GM12878 (cell line): ENCODE measurements at regions of chr6 and their contacts with region 1.

Region 1: DNA sequence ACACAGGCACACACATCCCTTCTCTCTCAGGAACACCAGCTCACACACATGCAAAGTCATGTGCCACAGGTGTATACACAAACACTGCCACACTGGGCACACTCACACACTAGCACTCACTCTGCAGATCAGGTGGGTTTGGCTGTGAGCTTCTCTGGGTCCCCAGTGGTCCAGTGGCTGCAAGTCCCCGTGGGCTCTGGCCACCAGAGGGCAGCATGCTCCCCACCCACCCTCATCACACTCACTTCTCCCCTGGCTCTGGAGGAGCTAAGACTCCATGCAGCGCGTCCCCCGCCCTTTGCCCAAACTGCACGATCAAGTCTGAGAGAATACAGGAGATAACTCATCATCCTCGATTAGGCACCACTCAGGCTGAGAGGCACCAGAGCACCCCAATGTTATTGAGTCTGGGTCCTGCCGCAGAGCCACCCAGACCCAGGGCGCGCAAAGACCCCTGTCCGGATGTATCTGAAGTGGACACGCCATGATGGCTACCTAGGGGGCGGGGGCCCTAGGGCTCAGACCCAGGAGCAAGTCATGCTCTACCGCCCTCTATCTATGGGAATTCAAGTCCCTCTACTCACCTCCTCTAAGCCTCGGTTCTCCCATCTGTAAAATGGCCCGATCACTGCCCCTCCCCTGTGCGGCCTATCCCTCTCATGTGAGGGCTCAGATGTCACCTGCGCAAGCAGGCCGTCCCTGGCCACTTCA is 90.5 kb downstream of the GRM4 start:
- DNase-seq: no peak
- ATAC-seq: peak; percentile 92
- H3K4me3 ChIP-seq: no peak overlapping the region
- H3K27ac ChIP-seq: no peak overlapping the region
- H3K4me1 ChIP-seq: no peaks in the 10 kb centered on the region
- H3K27me3 ChIP-seq: no peaks in the 10 kb centered on the region; a peak in 3 of 4 replicates
- CTCF ChIP-seq: peak; percentile 65 to 93 (median 82)
- EP300 ChIP-seq: no peak
- POLR2A ChIP-seq: no peak
- RAD21 ChIP-seq: peak; percentile 51

Region 2: GRCh38 chr6:34005901-34006531 is 49.4 kb before region 1 on chr6:
- CTCF ChIA-PET with region 1: no interaction called
- POLR2A ChIA-PET with region 1: no interaction called
- RAD21 ChIA-PET with region 1: no interaction called
- SMC1A ChIA-PET with region 1: no interaction called
- in situ Hi-C with region 1: no loop called
- intact Hi-C with region 1: no loop called
- DNase-seq: no peak
- ATAC-seq: no peak
- H3K4me3 ChIP-seq: no peak overlapping the region
- H3K27ac ChIP-seq: no peak overlapping the region
- H3K4me1 ChIP-seq: no peaks in the 10 kb centered on the region
- H3K27me3 ChIP-seq: no peaks in the 10 kb centered on the region; a peak in 1 of 4 replicates
- CTCF ChIP-seq: no peak
- EP300 ChIP-seq: no peak
- POLR2A ChIP-seq: no peak
- RAD21 ChIP-seq: no peak

Region 3: DNA sequence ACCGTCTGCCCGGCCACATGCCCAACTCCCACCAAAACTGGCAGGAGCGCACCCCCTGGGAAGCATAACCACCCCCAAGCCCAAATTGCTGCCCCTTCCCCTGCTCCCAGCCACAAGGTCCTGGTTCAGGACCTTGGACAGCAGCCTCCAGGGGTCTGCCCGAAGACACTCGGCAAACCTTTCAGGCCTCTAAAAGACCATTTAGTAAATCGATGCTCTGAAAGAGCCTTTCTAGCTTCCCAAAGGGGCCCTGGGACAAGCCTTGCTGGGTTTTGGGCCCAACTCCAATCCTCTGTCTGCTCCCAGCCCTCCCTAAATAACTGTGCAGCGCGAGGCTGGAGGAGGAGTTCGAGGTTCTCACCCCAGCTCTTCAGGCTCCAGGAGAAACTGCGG is 60.0 kb after region 1 on chr6:
- CTCF ChIA-PET with region 1: no interaction called
- POLR2A ChIA-PET with region 1: no interaction called
- RAD21 ChIA-PET with region 1: no interaction called
- SMC1A ChIA-PET with region 1: no interaction called
- in situ Hi-C with region 1: no loop called
- intact Hi-C with region 1: no loop called
- DNase-seq: no peak
- ATAC-seq: no peak
- H3K4me3 ChIP-seq: no peak overlapping the region
- H3K27ac ChIP-seq: no peak overlapping the region
- H3K4me1 ChIP-seq: no peaks in the 10 kb centered on the region
- H3K27me3 ChIP-seq: no peaks in the 10 kb centered on the region; a peak in 2 of 4 replicates
- CTCF ChIP-seq: no peak
- EP300 ChIP-seq: no peak
- POLR2A ChIP-seq: no peak
- RAD21 ChIP-seq: no peak

Region 4: DNA sequence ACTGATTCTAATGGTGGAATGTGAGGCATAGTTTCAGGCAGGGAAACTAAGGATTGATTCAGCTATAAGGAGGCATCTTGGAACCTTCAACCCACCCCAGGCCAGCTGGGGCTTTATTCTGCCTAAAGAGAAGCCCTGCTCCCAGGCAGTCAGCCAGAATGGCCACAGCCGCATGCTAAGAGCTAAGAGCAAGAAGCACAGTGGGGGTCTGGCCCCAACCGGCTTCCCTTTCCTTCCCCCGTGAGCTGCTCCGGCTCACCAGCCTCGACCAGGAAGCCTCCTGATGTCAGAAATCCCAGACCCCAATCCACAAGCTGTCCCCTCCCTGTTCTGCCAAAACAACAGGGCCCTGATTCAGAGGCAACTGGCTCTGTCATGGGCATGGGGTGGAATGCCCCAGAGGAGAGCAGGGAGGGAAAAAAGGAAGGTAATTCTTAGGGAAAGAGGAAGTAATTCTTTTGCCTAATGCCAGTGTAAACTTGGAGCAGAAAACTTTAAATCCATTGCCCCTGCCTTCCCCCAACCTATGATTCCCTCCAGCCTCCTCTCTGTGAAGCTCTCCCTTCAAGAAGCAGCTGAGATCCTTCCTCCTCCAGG is 83.6 kb after region 1 on chr6:
- CTCF ChIA-PET with region 1: no interaction called
- POLR2A ChIA-PET with region 1: no interaction called
- RAD21 ChIA-PET with region 1: no interaction called
- SMC1A ChIA-PET with region 1: no interaction called
- in situ Hi-C with region 1: no loop called
- intact Hi-C with region 1: no loop called
- DNase-seq: no peak
- ATAC-seq: no peak
- H3K4me3 ChIP-seq: no peak overlapping the region
- H3K27ac ChIP-seq: no peak overlapping the region
- H3K4me1 ChIP-seq: no peaks in the 10 kb centered on the region
- H3K27me3 ChIP-seq: peaks cover 17 to 18% of the 10 kb centered on the region in 2 experiments
- CTCF ChIP-seq: no peak
- EP300 ChIP-seq: no peak
- POLR2A ChIP-seq: no peak
- RAD21 ChIP-seq: no peak

Region 5: DNA sequence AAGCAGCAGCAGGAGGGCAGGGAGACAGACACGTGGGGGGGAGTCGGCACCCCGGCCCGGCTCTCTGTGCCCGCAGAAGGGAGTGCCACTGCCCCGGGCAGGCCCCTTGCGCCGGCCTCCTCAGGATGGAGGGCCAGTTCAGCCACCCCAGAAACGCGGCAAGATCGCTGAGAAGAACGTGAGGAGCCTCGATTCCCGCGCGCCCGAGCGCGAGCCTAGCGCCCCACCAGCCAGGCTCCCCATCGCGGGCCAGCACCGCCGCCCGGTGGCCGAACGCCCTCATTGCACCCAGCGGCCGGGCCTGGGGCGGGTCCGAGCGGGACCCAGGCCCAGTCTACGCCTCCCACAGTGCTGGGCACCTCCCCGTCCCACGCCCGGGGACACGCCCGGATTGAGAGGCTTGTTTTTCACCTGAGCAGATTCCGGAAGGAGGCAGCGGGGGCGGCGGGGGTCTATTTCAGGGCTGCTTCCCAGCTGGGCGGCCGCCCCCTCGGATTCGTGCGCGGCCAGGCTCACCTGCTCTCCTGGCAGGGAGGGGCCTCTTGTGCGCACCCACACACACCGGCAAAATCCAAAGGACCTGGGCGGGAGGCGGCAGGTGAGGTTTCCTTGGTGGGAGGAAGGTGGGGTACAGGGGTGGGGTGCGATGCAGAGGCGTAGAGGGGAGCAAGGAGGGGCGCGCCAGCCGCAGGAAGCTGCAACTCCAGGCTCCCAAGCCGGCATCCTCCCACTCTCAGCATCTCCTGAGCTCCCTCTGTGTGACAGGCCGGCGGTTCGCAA is 99.5 kb after region 1 on chr6:
- CTCF ChIA-PET with region 1: interaction called, 19 read pairs
- POLR2A ChIA-PET with region 1: interaction called, 3 read pairs
- RAD21 ChIA-PET with region 1: interaction called, 5 read pairs
- SMC1A ChIA-PET with region 1: interaction called, 4 read pairs
- in situ Hi-C with region 1: loop called (anchors 10 kb)
- intact Hi-C with region 1: loop called (anchors 1 kb)
- DNase-seq: no peak
- ATAC-seq: peak; percentile 94
- H3K4me3 ChIP-seq: no peak overlapping the region; the same call in 1 of the 2 replicates
- H3K27ac ChIP-seq: no peak overlapping the region
- H3K4me1 ChIP-seq: peaks cover 10% of the 10 kb centered on the region
- H3K27me3 ChIP-seq: peaks cover 3% of the 10 kb centered on the region in 2 experiments; a peak in 3 of 4 replicates
- CTCF ChIP-seq: peak; percentile 91 to 96 (median 96)
- EP300 ChIP-seq: no peak
- POLR2A ChIP-seq: no peak
- RAD21 ChIP-seq: peak; percentile 97

Region 6: DNA sequence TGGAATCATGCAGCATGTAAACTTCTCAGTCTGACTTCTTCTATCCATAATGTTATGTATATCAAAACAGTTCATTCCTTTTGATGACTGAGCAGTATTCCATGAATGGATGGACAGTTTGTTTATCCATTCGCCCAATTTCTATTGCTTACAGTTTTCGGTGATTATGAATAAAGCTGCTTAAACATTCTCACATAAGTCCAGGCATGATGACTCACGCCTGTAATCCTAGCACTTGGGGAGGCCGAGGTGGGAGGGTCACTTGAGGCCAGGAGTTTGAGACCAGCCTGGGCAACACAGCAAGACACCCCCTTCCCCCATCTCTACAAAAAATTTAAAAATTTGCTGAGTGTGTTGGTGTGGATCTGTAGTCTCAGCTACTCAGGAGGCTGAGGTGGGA is 158.4 kb after region 1 on chr6:
- CTCF ChIA-PET with region 1: no interaction called
- POLR2A ChIA-PET with region 1: no interaction called
- RAD21 ChIA-PET with region 1: no interaction called
- SMC1A ChIA-PET with region 1: no interaction called
- in situ Hi-C with region 1: no loop called
- intact Hi-C with region 1: no loop called
- DNase-seq: no peak
- ATAC-seq: no peak
- H3K4me3 ChIP-seq: no peak overlapping the region
- H3K27ac ChIP-seq: no peak overlapping the region
- H3K4me1 ChIP-seq: no peaks in the 10 kb centered on the region
- H3K27me3 ChIP-seq: no peaks in the 10 kb centered on the region
- CTCF ChIP-seq: no peak
- EP300 ChIP-seq: no peak
- POLR2A ChIP-seq: no peak
- RAD21 ChIP-seq: no peak